Calu3 (cell line): ENCODE measurements at regions of chr6 and their contacts with region 1.

Region 1: GRCh38 chr6:114810468-114810867 is 467.6 kb upstream of the HS3ST5 start:
- DNase-seq: no peak
- H3K4me3 Mint-ChIP-seq: no peak overlapping the region
- H3K27ac Mint-ChIP-seq: no peak overlapping the region
- H3K4me1 Mint-ChIP-seq: no peaks in the 10 kb centered on the region
- H3K27me3 Mint-ChIP-seq: no peaks in the 10 kb centered on the region
- CTCF ChIP-seq: no peak

Region 2: DNA sequence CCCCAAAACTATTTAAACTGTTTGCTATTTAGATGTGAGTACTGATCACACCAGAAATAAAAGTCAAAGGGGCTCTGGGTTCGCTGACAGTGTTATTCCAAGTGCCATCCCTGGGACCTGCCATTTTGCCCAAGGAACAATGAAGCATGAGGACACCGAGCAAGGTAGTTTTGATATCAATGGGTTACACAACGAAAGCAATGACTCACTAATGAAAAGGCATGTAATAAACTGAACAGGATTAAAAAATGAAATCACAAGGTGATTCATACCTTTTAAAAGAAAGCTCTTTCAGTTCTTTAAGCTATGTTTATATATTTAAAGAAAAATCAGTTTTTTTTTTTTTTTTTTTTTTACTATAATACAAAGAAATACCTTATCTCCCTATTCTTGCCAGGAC is 569.7 kb before region 1 on chr6:
- CTCF ChIA-PET with region 1: no interaction called
- intact Hi-C with region 1: loop called (anchors 5 kb)
- DNase-seq: no peak
- H3K4me3 Mint-ChIP-seq: no peak overlapping the region
- H3K27ac Mint-ChIP-seq: no peak overlapping the region
- H3K4me1 Mint-ChIP-seq: no peaks in the 10 kb centered on the region
- H3K27me3 Mint-ChIP-seq: no peaks in the 10 kb centered on the region
- CTCF ChIP-seq: no peak